K562 (cell line): ENCODE measurements at regions of chr10 and their contacts with region 1.

Region 1: DNA sequence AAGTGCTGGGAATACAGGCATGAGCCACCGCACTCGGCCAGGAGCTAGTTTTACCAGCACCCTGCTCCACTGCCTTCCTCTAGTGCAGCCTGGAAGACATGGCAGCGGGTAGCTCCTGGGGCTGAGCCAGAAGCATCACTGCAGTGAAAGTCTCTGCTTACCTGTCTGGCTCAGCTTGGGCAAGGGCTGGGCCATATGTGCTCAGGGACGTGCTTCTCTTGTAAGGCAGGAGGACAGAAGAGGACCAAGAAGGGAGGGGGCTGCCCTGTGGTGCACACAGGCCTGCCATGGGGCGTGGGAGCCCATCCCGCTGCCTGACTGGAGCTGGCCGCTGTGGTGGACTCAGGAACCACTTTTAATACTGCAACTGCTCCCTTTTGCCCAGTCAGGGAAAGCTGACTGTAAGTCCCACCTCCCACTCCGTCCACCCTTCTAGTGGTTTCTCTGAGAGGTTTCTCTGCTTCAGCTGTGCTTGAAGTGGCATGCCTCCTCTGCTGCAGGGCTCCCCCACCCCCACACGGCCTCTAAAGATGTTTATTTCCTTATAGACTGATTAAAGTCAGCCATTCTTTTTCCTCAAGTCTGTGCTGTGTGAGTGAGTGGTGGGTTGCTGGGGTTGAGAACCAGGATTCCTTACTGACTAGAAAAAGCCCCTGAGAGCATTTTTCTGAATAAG is 25.3 kb upstream of the C10orf95 start:
- DNase-seq: no peak
- ATAC-seq: no peak
- H3K4me3 ChIP-seq: no peak overlapping the region
- H3K27ac ChIP-seq: no peak overlapping the region
- H3K4me1 ChIP-seq: peaks cover 4 to 9% of the 10 kb centered on the region in 2 experiments; a peak in 4 of 5 replicates
- H3K27me3 ChIP-seq: no peaks in the 10 kb centered on the region
- CTCF ChIP-seq: no peak
- EP300 ChIP-seq: no peak
- POLR2A ChIP-seq: no peak
- RAD21 ChIP-seq: no peak

Region 2: DNA sequence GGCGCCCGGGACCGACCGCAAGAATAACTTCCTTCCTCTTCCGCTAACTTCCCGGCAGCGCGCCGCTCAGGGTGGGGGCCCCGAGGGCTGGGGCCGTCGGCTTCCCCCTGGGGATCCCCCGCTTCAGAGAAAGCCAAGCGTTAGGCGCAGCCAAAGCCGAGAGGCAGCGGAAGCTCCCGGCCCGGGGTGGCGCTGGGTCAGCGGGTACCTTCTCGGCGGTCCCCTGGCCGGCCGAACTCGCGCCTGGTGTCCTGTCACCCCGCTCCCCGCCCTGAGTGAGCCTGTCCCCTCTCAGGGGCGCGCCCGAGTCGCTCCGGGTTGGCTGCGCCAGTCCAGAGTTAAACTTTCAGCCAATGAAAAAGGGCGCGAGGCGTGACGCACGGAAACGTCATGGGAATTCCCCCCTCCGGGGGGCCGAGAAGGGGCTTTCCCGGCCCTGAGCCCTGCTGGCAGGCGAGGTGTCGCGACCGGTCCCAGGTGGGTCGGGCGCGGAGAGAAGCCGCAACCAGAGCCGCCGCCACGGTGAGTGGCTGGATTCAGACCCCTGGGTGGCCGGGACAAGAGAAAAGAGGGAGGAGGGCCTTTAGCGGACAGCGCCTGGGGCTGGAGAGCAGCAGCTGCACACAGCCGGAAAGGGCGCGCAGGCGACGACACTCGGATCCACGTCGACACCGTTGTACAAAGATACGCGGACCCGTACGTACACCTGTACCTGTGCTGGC is 82.4 kb before region 1 on chr10:
- CTCF ChIA-PET with region 1: interaction called, 6 read pairs
- POLR2A ChIA-PET with region 1: no interaction called
- in situ Hi-C with region 1: no loop called
- intact Hi-C with region 1: loop called (anchors 1 kb)
- DNase-seq: peak; percentile 87 to 93 (median 90)
- ATAC-seq: peak; percentile 93
- H3K4me3 ChIP-seq: peak overlapping the region; percentile 78
- H3K27ac ChIP-seq: peak overlapping the region; percentile 66
- H3K4me1 ChIP-seq: peaks cover 14 to 40% of the 10 kb centered on the region in 2 experiments; a peak in 4 of 5 replicates
- H3K27me3 ChIP-seq: no peaks in the 10 kb centered on the region
- CTCF ChIP-seq: peak in 1 of 3 experiments; percentile 95; a peak in 1 of 6 replicates
- EP300 ChIP-seq: no peak
- POLR2A ChIP-seq: peak; percentile 59; the same call in 1 of the 2 replicates
- RAD21 ChIP-seq: peak; percentile 76